Posterior cingulate gyrus (tissue), 11 donors: ENCODE measurements at regions of chr7 and their contacts with region 1.

Region 1: GRCh38 chr7:92245487-92246362 is at the starts of genes ANKIB1 and KRIT1:
- DNase-seq: peak; percentile 87 to 99 (median 92)

Region 2: GRCh38 chr7:92359801-92360200 is 114.1 kb after region 1 on chr7:
- intact Hi-C with region 1: loop called (anchors 10 kb)
- DNase-seq: no peak

Region 3: DNA sequence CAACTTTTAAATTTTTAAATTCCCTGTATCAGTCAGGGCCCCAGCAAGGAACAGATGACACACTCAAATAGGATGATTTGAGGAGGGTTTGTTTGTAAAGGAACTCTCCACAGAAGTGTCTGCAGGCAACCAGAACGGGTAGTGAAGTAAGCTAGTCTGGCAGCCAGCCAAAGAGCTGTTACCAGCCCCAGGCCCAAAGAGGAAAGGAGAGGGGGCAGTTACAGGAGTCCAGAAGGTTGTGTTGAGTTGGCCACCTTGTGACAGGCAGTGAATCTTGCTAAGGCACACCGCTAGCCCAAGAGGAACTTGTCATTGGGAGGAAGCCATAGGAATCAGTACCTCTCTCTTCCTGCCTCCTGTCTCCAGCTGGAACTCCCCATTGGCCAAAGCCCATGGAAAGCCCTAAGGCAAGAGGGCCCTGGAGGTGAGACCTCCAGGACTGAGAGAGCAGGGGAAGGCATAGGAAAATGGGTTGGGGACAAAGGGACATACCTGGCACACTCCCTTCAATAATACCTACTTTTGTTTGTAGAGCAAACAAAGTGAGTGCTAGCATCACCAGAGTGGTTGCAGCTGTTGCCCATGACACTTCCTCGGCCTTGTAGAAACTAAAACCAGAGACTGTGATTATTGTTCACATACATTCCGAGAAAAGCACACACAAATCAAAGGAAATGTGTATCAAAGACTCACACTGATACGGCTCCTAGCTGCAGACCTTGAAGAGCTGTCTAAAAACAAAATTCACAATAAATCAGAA is 176.1 kb after region 1 on chr7:
- intact Hi-C with region 1: loop called (anchors 10 kb)
- DNase-seq: no peak

Region 4: DNA sequence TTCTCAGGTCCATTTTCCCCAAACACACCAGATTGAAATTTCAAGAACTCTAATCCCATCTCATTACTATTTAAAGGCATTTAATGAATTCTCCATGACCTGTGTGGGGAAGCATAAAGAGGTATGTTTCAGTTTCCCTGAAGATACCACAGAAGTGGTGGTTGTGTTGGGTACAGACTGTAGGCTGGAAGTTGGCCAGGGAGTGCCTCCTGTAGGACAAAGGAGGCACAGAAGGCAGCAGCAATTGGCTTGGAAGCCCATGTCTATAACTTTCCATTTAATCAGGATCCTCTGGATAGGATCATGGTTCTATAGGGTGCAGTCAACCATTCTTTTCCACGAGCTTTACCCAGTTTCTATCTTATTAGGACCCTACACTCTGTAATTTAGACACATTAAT is 1767.0 kb after region 1 on chr7:
- intact Hi-C with region 1: no loop called
- DNase-seq: no peak